A673 (cell line): ENCODE measurements at regions of chr10 and their contacts with region 1.

Region 1: GRCh38 chr10:112375721-112376395 is 1.9 kb downstream of the ACSL5 start:
- DNase-seq: no peak
- H3K4me3 ChIP-seq: no peak overlapping the region
- H3K27ac ChIP-seq: no peak overlapping the region
- H3K4me1 ChIP-seq: no peaks in the 10 kb centered on the region
- H3K27me3 ChIP-seq: no peaks in the 10 kb centered on the region
- CTCF ChIP-seq: no peak

Region 2: DNA sequence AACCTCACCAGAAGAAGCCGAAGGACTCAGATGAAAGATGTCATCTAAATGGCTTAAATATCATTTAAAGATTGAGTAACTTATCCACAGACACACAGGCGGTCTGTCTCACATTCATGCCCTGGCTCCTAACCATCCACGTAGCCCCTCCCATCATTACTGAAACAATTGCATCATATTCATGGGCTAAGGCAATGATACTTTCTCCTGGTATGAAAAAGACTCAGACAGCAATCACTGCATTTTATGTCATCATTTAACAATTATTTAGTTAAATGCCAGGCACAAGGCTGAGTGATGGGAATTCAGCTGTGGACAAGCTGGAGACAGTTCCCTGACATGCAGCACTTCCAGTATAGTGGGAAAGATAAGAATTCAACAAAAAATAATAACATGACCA is 103.9 kb before region 1 on chr10:
- CTCF ChIA-PET with region 1: no interaction called
- POLR2A ChIA-PET with region 1: no interaction called
- intact Hi-C with region 1: no loop called
- DNase-seq: peak; percentile 10
- H3K4me3 ChIP-seq: no peak overlapping the region
- H3K27ac ChIP-seq: no peak overlapping the region
- H3K4me1 ChIP-seq: no peaks in the 10 kb centered on the region
- H3K27me3 ChIP-seq: no peaks in the 10 kb centered on the region
- CTCF ChIP-seq: no peak

Region 3: DNA sequence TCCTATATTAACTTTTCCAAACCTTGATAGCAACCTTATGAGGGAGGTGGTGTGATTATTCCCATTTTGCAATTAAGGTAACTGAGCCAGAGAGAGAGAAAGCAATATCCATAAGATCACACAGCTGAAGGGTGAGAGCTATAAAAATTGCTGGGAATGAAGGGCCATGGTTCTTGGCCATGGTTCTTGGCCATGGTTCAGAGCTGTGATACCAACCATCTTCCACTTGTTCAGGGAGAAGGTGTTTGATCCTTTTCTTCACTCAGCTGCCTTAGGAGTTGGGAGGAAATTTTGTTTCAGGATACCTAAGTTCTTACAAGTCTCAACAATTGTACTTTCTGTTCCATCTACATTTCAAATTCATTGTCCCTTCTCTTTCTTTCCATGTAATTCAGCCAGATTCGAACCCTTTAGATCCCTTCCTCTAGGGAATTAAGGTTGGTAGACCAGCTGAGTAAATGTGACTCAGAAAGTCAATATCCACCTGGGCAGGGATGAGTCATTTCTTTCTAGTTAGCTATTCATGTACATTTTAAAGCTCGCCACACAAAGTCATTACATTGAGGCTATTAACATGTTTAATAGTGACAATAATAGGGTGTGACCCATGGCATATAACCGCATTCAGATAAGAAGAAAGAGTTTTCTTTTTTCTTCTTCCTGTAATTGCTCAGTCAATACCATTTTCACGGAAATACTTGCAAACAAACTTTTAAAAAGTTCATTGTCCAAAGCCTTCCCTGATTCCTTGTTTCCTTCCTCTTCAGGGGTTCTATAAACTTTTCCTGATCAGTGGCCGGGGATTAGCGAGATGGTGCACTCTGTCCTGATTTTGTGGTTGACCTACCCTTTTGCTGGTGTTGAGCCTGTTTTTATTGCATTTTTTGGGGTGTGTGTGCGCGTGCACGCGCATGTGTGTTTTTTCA is 717.6 kb after region 1 on chr10:
- CTCF ChIA-PET with region 1: no interaction called
- POLR2A ChIA-PET with region 1: no interaction called
- intact Hi-C with region 1: loop called (anchors 10 kb)
- DNase-seq: peak; percentile 42
- H3K4me3 ChIP-seq: no peak overlapping the region
- H3K27ac ChIP-seq: no peak overlapping the region
- H3K4me1 ChIP-seq: peaks cover 36% of the 10 kb centered on the region
- H3K27me3 ChIP-seq: no peaks in the 10 kb centered on the region
- CTCF ChIP-seq: no peak